Mammary epithelial cell (primary cell): ENCODE measurements at regions of chr4 and their contacts with region 1.

Region 1: GRCh38 chr4:112109186-112110058 is 35.8 kb upstream of the FAM241A start:
- DNase-seq: peak; percentile 55
- H3K4me3 ChIP-seq: no peak overlapping the region
- H3K27ac ChIP-seq: no peak overlapping the region
- H3K4me1 ChIP-seq: peaks cover 15% of the 10 kb centered on the region
- H3K27me3 ChIP-seq: no peaks in the 10 kb centered on the region
- CTCF ChIP-seq: no peak

Region 2: GRCh38 chr4:112189754-112190153 is 80.3 kb after region 1 on chr4:
- CTCF ChIA-PET with region 1: no interaction called
- dilution Hi-C with region 1: no loop called
- in situ Hi-C with region 1: no loop called
- intact Hi-C with region 1: loop called (anchors 5 kb)
- DNase-seq: no peak
- H3K4me3 ChIP-seq: no peak overlapping the region
- H3K27ac ChIP-seq: no peak overlapping the region
- H3K4me1 ChIP-seq: no peaks in the 10 kb centered on the region
- H3K27me3 ChIP-seq: no peaks in the 10 kb centered on the region
- CTCF ChIP-seq: peak; percentile 3 to 31

Region 3: DNA sequence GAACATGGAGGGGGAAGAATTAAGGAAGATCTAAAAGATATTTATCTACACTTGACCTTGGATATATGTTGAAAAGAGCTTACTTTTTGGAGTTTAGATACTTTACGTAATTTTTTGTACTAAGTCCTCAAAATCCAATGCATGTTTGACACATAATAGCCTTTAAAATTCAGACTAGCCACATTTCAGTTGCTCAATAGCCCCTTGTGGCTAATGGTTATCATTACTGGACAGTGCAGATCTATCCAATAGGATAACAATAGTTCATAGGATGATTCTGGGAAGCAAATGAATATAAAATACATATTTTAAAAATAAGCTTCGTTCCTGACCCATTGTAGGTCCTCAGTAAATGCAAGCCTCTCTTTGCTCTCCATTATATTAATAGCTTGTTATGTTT is 136.0 kb after region 1 on chr4:
- CTCF ChIA-PET with region 1: no interaction called
- dilution Hi-C with region 1: no loop called
- in situ Hi-C with region 1: no loop called
- intact Hi-C with region 1: no loop called
- DNase-seq: no peak
- H3K4me3 ChIP-seq: no peak overlapping the region
- H3K27ac ChIP-seq: no peak overlapping the region
- H3K4me1 ChIP-seq: no peaks in the 10 kb centered on the region
- H3K27me3 ChIP-seq: no peaks in the 10 kb centered on the region
- CTCF ChIP-seq: peak in 1 of 2 donors; percentile 9

Region 4: DNA sequence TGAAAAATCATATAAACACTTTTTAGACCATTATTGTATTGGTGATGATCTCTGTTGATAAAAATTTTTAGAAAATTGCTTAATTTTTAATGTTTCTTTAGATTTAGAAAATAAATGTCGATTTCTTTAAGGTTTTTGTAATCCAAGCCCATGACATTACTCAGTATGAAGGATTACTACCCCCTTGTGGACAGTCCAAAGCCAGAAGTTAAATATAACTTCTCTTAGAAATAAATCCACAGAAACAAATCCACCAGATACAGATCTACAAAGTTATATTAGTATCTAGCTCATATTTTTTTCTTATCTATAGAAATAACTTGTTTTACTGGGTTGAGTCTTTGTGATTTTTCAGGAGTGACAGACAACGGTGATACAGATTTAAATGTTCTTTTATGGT is 157.4 kb after region 1 on chr4:
- CTCF ChIA-PET with region 1: no interaction called
- dilution Hi-C with region 1: no loop called
- in situ Hi-C with region 1: no loop called
- intact Hi-C with region 1: no loop called
- DNase-seq: peak; percentile 14
- H3K4me3 ChIP-seq: no peak overlapping the region
- H3K27ac ChIP-seq: no peak overlapping the region
- H3K4me1 ChIP-seq: peaks cover 14% of the 10 kb centered on the region
- H3K27me3 ChIP-seq: no peaks in the 10 kb centered on the region
- CTCF ChIP-seq: peak; percentile 44 to 46

Region 5: GRCh38 chr4:112296949-112297880 is 187.8 kb after region 1 on chr4 and contains the start of gene ALPK1:
- CTCF ChIA-PET with region 1: no interaction called
- dilution Hi-C with region 1: no loop called
- in situ Hi-C with region 1: no loop called
- intact Hi-C with region 1: no loop called
- DNase-seq: peak; percentile 84
- H3K4me3 ChIP-seq: peak within 1 kb of the TSS; percentile 49 to 87 (median 61)
- H3K27ac ChIP-seq: peak within 1 kb of the TSS; percentile 75
- H3K4me1 ChIP-seq: no peaks in the 10 kb centered on the region
- H3K27me3 ChIP-seq: no peaks in the 10 kb centered on the region
- CTCF ChIP-seq: no peak
- total RNA-seq, gene ALPK1: 19.0 to 24.3 TPM

Region 6: GRCh38 chr4:112516471-112517066 is 407.1 kb after region 1 on chr4:
- CTCF ChIA-PET with region 1: interaction called, 13 read pairs
- dilution Hi-C with region 1: no loop called
- in situ Hi-C with region 1: no loop called
- intact Hi-C with region 1: no loop called
- DNase-seq: no peak
- H3K4me3 ChIP-seq: peak overlapping the region; percentile 12 to 25 (median 24)
- H3K27ac ChIP-seq: no peak overlapping the region
- H3K4me1 ChIP-seq: peaks cover 29% of the 10 kb centered on the region
- H3K27me3 ChIP-seq: peaks cover 56% of the 10 kb centered on the region
- CTCF ChIP-seq: no peak